ENCODE measurements at regions of chr15 and their contacts with region 1.

Region 1: DNA sequence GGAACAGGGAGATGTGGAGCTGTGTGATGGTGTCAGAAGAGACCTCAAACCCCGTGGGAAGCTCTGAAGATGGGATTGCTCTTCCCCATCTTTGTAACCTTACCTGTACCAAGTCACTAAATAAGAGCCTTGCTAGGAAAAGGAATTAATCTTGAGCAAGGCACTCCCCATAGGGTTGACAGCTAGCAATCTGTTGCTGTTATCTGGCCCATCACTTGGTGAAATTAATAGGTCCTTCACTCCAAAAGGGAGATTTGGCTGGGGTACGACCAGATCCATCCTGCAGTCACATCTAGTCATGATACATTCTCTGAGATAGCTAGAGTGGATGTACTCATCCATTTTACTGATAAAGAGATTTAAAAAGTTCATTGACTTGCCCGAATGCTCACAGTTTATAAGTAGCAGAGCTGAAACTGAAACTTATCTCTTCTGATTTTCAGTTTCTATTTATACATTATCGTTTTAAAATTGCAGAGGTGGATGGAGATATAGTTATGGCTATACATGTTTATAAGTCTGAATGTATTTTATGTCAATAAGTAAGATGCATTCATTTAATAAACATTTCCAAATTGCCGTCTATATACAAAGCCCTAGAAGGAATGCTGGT is 299.1 kb upstream of the MCTP2 start:
- DNase-seq: no peak
- H3K4me3 ChIP-seq: no peak overlapping the region
- H3K27ac ChIP-seq: no peak overlapping the region
- H3K4me1 ChIP-seq: no peaks in the 10 kb centered on the region
- H3K27me3 ChIP-seq: no peaks in the 10 kb centered on the region
- CTCF ChIP-seq: no peak
- POLR2A ChIP-seq: no peak

Region 2: DNA sequence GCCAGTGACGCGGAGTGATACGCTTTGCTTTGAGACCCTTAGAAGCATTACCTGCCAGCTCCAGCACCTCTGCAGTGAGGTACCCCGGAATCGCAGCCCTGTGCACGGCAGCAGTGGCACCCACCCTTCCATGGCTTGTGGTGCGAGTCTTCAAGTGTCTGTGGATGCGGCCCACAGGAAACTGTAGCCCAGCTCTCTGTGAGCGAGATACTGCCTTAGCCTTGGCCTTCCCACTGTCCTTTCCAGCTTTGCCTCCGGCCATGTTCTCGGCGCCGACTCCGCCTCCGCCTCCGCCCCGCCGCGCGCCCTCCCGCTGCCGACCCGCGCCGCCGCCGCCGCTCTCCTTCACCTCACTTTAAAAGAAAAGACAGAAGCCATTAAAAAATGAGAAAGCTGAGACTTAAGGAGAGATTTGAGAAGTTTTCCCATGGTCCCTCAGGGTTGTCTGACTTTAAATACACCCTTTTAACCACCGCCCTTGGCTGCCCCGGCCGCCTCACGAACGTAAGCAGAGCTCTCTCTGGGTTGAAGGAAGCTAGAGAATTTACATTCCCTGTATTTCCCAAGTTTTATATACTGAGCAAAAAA is 1198.2 kb before region 1 on chr15:
- intact Hi-C with region 1: loop called (anchors 5 kb)
- DNase-seq: no peak
- H3K4me3 ChIP-seq: peak overlapping the region; percentile 36 to 64 (median 47)
- H3K27ac ChIP-seq: peak overlapping the region; percentile 32 to 66
- H3K4me1 ChIP-seq: no peaks in the 10 kb centered on the region
- H3K27me3 ChIP-seq: no peaks in the 10 kb centered on the region
- CTCF ChIP-seq: no peak
- POLR2A ChIP-seq: no peak

Region 3: GRCh38 chr15:93882141-93882540 is 50.1 kb before region 1 on chr15:
- intact Hi-C with region 1: no loop called
- DNase-seq: no peak
- H3K4me3 ChIP-seq: no peak overlapping the region
- H3K27ac ChIP-seq: no peak overlapping the region
- H3K4me1 ChIP-seq: no peaks in the 10 kb centered on the region
- H3K27me3 ChIP-seq: no peaks in the 10 kb centered on the region
- CTCF ChIP-seq: no peak
- POLR2A ChIP-seq: no peak

Measured in breast epithelium (tissue), 4 donors.